ENCODE measurements at regions of chr3 and their contacts with region 1.

Region 1: DNA sequence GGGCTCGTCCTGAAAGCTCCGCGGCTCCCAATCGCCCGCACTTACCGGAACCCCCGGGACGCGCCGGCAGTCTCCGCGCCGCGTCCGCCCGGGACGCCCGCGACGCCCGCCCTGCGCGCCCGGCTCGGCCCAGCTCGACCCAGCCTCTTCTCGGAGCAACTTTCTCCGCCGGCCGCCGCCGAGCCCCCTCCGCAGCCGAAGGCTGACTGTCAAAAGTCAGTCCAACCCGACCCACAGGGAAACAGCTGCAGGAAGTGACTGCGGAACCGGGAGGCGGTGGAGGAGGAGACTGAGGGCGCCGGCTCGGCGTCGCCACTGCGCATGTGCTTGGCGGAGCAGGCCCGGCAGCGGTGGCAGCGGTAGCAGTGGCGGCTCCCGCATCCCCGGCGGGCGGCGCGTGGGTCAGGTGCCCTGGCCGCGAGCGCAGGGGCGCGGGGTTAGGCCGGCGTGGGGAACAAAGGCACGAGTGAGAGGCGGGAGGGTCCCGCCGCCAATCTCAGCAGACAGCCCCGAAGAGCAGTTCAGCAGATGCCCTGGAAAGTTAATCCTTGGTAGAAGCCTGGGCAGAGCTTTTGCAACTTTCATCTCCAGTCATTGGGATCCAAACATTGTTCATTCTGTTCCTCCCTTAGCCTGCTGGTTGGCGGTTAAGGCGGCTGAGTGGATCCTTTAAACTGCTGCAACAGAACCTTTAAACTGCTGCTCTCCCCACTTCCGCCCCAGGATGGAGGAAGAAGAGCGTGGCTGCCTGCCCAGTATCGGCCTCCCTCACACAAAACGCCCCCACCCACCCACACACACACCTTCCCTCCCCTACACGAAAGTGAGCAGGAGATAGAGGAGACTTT is at the start of gene ZMAT3:
- DNase-seq: peak; percentile 41 to 92
- H3K4me3 ChIP-seq: peak within 1 kb of the TSS; percentile 75 to 91
- H3K27ac ChIP-seq: peak within 1 kb of the TSS; percentile 76 to 89
- H3K4me1 ChIP-seq: peaks cover 0 to 9% of the 10 kb centered on the region in 2 donors
- H3K27me3 ChIP-seq: no peaks in the 10 kb centered on the region
- CTCF ChIP-seq: no peak
- total RNA-seq, gene ZMAT3: 38.0 TPM

Region 2: GRCh38 chr3:179015551-179016020 is 56.2 kb before region 1 on chr3:
- intact Hi-C with region 1: loop called (anchors 5 kb)
- DNase-seq: no peak
- H3K4me3 ChIP-seq: no peak overlapping the region
- H3K27ac ChIP-seq: no peak overlapping the region
- H3K4me1 ChIP-seq: peaks cover 0 to 2% of the 10 kb centered on the region in 2 donors
- H3K27me3 ChIP-seq: no peaks in the 10 kb centered on the region
- CTCF ChIP-seq: peak; percentile 75 to 84 (median 83)

Region 3: GRCh38 chr3:179147873-179148615 is 76.3 kb after region 1 on chr3 and contains the start of gene PIK3CA:
- intact Hi-C with region 1: loop called (anchors 5 kb)
- DNase-seq: peak; percentile 90 to 98
- H3K4me3 ChIP-seq: peak within 1 kb of the TSS; percentile 95 to 97
- H3K27ac ChIP-seq: peak within 1 kb of the TSS; percentile 93 to 99
- H3K4me1 ChIP-seq: peaks cover 0 to 14% of the 10 kb centered on the region in 2 donors
- H3K27me3 ChIP-seq: no peaks in the 10 kb centered on the region
- CTCF ChIP-seq: no peak
- total RNA-seq, gene PIK3CA: 12.7 TPM

Region 4: DNA sequence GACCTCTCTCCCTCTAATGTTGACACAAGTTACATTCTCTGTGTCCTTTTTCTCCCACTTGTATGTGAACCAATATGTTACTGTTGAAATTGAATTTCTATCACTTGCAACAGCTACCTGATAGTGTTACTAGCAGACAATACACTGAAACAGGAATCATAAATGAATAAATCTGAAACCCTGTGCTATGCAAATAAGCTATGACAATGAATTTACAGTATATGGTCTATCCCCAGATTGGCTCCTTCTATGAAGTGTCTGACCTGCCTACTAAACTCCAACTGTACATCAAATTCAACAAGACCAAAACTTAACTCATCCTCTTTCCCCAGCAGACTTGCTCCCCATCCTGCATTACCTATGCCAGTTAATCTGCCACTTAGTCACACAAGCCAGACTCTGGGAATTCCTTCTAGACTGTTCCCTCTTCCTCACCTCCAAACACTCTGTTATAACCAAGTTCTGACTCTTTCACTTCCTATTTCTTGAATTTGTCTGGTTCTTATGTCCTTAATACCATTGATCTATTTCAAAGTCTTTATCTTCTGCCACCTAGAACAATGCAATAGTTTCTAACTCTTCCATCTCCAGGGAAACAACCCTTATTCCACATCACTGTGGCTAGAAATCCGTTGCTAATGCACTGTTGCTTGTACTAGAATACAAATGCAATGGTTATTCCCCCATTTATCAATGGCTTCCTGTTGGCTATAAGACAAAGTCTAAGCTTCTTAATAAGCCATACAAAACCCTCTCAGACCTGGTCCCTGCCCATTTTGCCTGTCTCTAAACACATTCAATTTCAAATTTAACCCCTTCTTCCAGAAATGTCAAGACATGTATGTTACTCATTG is 237.7 kb after region 1 on chr3:
- intact Hi-C with region 1: loop called (anchors 10 kb)
- DNase-seq: no peak
- H3K4me3 ChIP-seq: no peak overlapping the region
- H3K27ac ChIP-seq: no peak overlapping the region
- H3K4me1 ChIP-seq: no peaks in the 10 kb centered on the region
- H3K27me3 ChIP-seq: no peaks in the 10 kb centered on the region
- CTCF ChIP-seq: no peak

Measured in ascending aorta (tissue), 2 donors.